Activated naive CD4-positive, alpha-beta T cell treated with anti-CD3 and anti-CD28 coated beads for 36 hours (primary cell): ENCODE measurements at regions of chr22 and their contacts with region 1.

Region 1: GRCh38 chr22:32202539-32203180 is 2.2 kb downstream of the RFPL2 start:
- DNase-seq: peak; percentile 53
- H3K4me3 Mint-ChIP-seq: peak overlapping the region; percentile 66
- H3K27ac Mint-ChIP-seq: no peak overlapping the region
- H3K4me1 Mint-ChIP-seq: peaks cover 34% of the 10 kb centered on the region
- H3K27me3 Mint-ChIP-seq: peaks cover 17% of the 10 kb centered on the region

Region 2: DNA sequence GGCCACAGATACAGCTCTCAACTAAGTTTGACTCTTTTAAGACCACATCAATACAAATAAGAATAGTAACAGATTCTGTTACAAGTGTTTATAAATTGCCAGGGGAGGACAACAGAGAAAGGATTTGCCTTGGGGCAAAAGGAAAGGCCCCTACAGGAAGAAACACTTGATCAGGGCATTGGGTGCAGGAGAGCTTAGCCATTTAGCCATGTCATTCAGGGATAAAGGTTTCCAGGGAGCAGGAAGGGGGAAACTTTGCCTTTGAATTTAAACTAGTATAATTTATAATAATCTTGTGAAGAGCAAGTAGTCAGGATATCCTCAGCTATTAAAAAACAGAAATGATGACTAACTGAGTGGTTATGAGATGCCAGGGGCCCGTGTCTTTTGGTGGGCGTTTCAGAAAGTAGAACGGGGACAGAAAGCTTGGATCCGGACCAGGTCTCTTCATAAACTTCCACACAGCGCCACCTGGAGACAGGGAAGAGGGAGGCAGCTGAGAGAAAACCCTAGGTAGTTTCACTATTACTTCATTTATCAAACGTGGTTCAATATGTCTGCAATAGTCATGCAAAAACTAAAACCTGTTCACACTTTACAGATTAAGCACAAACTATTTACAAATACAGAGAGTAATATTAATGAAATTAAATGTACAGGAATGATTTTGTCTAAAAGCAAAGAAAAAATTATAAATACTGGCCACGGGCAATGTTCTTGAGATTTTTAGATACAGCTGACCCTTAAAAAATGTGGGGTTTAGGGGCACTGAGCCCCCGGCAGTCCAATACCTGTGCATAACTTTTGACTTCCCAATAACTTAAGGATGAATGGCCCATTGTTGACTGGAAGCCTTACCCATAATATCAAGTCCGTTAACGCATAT is 63.5 kb after region 1 on chr22:
- CTCF ChIA-PET with region 1: interaction called, 4 read pairs
- intact Hi-C with region 1: loop called (anchors 1 kb)
- DNase-seq: peak; percentile 84
- H3K4me3 Mint-ChIP-seq: no peak overlapping the region
- H3K27ac Mint-ChIP-seq: no peak overlapping the region
- H3K4me1 Mint-ChIP-seq: peaks cover 8% of the 10 kb centered on the region
- H3K27me3 Mint-ChIP-seq: no peaks in the 10 kb centered on the region